Activated CD8-positive, alpha-beta T cell treated with anti-CD3 and anti-CD28 coated beads, Interleukin-2, amount 10 ng/mL, durations not matched to agents 7 days and 5 days (primary cell): ENCODE measurements at regions of chr16 and their contacts with region 1.

Region 1: DNA sequence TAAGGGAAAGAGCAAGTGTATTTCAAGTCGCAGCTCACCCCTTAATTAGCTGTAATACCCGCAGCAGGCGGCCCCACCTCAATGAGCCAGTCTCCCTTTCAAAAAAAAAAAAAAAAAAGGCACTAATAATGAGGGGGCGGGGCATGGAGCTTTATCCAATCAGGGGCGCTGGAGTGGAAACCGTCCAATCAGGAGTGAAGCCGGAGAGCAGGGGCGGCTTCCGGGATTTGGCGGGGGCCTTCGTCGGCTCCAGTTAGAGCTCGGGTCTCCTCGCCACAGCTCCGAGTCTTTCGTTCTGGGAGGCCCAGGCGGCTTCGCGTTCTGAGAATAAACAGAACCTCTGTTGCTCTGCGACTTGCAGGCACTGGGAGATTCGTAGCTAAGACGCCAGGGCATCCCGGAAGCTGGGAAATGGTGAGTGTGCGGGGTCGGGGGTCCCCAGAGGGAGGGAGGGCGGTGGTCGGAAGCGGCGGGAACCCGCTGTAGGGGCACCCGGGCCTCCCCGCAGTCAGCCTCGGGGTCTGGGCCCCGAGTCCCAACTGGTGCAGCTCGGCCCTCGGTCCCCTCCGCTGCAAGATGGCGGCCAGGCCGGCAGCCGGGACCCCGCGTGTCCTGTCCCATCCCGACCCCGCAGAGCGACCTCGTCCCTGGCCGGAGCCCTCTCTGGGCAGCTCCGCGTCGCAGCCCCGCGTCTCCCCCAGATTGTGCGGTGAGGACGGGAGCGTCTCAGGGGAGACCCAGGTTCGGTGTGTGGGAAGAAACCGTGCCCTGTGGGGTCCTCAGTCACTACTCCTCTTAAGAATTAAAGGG is at the start of gene ZNF267:
- DNase-seq: peak; percentile 96
- ATAC-seq: peak; percentile 73
- H3K4me3 Mint-ChIP-seq: peak within 1 kb of the TSS; percentile 90
- H3K27ac Mint-ChIP-seq: peak within 1 kb of the TSS; percentile 97
- H3K4me1 Mint-ChIP-seq: peaks cover 81% of the 10 kb centered on the region
- H3K27me3 Mint-ChIP-seq: no peaks in the 10 kb centered on the region
- total RNA-seq, gene ZNF267: 43.9 to 49.8 TPM

Region 2: DNA sequence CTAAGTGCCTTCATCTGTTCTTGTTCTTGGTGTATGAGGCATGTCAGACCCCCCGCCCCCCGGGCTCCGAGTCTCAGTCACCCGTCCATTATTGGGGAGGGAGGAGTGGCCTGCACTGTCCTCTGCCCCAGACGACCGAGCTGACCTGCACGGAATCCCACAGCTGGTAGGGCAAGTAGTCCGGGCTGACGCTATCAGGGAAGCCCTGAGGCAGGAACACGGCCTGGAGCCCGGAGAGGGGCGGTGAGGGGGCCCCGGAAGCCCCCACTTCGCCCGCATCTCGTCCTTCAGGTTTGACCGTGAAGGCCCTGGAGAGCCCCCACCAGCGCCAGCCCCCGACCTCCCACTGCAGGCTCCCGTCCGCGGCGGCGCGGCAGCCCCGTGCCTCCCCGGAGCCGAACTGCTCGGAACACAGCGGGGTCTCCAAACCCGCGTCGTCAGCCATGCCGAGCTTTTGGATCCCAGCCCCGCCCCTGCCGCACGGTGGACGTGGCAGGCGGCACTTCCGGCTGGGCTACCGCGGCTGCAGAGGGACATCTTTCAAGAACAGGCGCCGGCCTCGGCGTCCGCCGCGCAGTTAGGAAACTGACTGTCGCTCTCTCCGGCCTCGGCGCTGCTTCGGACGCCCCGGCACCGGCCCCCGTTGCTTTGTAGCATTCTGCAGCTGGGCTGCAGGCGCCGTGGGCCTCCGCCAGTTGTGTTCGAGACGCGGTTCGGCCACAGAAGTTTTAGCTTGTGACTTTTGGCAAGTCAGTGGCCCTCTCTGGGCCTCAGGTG is 365.6 kb before region 1 on chr16 and contains the start of gene RUSF1:
- CTCF ChIA-PET with region 1: interaction called, 6 read pairs
- POLR2A ChIA-PET with region 1: interaction called, 13 read pairs
- DNase-seq: peak; percentile 89
- ATAC-seq: peak; percentile 91
- H3K4me3 Mint-ChIP-seq: peak within 1 kb of the TSS; percentile 96
- H3K27ac Mint-ChIP-seq: peak within 1 kb of the TSS; percentile 94
- H3K4me1 Mint-ChIP-seq: peaks cover 47% of the 10 kb centered on the region
- H3K27me3 Mint-ChIP-seq: no peaks in the 10 kb centered on the region
- total RNA-seq, gene RUSF1: 31.7 to 32.8 TPM

Region 3: GRCh38 chr16:31700526-31701388 is 173.0 kb before region 1 on chr16:
- CTCF ChIA-PET with region 1: interaction called, 12 read pairs
- POLR2A ChIA-PET with region 1: interaction called, 12 read pairs
- DNase-seq: peak; percentile 92
- ATAC-seq: peak; percentile 82
- H3K4me3 Mint-ChIP-seq: peak overlapping the region; percentile 90
- H3K27ac Mint-ChIP-seq: peak overlapping the region; percentile 92
- H3K4me1 Mint-ChIP-seq: peaks cover 38% of the 10 kb centered on the region
- H3K27me3 Mint-ChIP-seq: no peaks in the 10 kb centered on the region